ENCODE measurements at regions of chr2 and their contacts with region 1.

Region 1: GRCh38 chr2:108575132-108575966 is 41.1 kb downstream of the LIMS1 start:
- DNase-seq: peak; percentile 70
- ATAC-seq: peak; percentile 92
- H3K4me3 ChIP-seq: peak overlapping the region; percentile 24; the same call in 1 of the 2 replicates
- H3K27ac ChIP-seq: no peak overlapping the region
- H3K4me1 ChIP-seq: peaks cover 13% of the 10 kb centered on the region
- H3K27me3 ChIP-seq: no peaks in the 10 kb centered on the region
- CTCF ChIP-seq: no peak
- EP300 ChIP-seq: peak; percentile 42 to 72; a peak in 1 of 4 replicates
- POLR2A ChIP-seq: no peak
- RAD21 ChIP-seq: no peak

Region 2: GRCh38 chr2:108448678-108449493 is 126.5 kb before region 1 on chr2 and contains the start of gene GCC2:
- CTCF ChIA-PET with region 1: interaction called, 4 read pairs
- POLR2A ChIA-PET with region 1: interaction called, 12 read pairs
- RAD21 ChIA-PET with region 1: interaction called, 5 read pairs
- SMC1A ChIA-PET with region 1: interaction called, 20 read pairs
- in situ Hi-C with region 1: no loop called
- intact Hi-C with region 1: loop called (anchors 5 kb)
- DNase-seq: peak; percentile 75
- ATAC-seq: peak; percentile 95
- H3K4me3 ChIP-seq: peak within 1 kb of the TSS; percentile 93
- H3K27ac ChIP-seq: peak within 1 kb of the TSS; percentile 86
- H3K4me1 ChIP-seq: peaks cover 7% of the 10 kb centered on the region
- H3K27me3 ChIP-seq: no peaks in the 10 kb centered on the region
- CTCF ChIP-seq: no peak
- EP300 ChIP-seq: peak in 1 of 2 experiments; percentile 38; a peak in 2 of 4 replicates
- POLR2A ChIP-seq: peak; percentile 95
- RAD21 ChIP-seq: no peak
- polyA plus RNA-seq, gene GCC2: 11.8 to 13.5 TPM

Region 3: GRCh38 chr2:108542071-108542470 is 33.3 kb before region 1 on chr2:
- CTCF ChIA-PET with region 1: interaction called, 9 read pairs
- POLR2A ChIA-PET with region 1: interaction called, 13 read pairs
- RAD21 ChIA-PET with region 1: interaction called, 129 read pairs
- SMC1A ChIA-PET with region 1: interaction called, 214 read pairs
- in situ Hi-C with region 1: no loop called
- intact Hi-C with region 1: loop called (anchors 5 kb)
- DNase-seq: no peak
- ATAC-seq: no peak
- H3K4me3 ChIP-seq: no peak overlapping the region
- H3K27ac ChIP-seq: no peak overlapping the region
- H3K4me1 ChIP-seq: no peaks in the 10 kb centered on the region; the same call in 1 of the 2 replicates
- H3K27me3 ChIP-seq: no peaks in the 10 kb centered on the region
- CTCF ChIP-seq: no peak
- EP300 ChIP-seq: no peak
- POLR2A ChIP-seq: no peak
- RAD21 ChIP-seq: no peak

Region 4: DNA sequence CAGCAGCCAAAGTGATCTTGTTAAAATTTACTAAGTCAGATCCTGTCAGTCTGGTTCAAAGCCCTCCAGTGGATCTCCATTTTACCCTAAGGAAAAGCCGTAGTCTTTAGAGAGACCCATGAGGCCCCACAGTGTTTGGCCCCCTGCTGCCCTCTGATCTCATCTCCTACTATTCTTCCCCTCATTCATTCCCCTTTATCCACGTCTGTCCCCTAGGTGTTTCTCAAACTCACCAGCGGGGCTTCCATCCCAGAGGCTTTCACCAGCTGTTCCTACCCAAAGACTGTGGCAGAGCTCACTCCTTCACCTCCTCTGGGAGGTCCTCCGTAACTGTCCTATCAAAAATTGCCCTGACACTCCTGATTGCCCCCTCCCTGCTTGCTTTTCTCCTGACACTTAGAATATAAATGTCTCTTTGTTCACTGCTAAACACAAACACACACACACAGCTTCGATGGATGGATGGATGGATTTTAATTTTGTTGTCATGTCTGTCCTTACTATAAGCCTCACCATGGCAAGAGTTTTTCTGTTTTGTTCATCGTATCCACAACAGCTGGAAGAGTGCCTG is 15.0 kb before region 1 on chr2:
- CTCF ChIA-PET with region 1: interaction called, 10 read pairs
- POLR2A ChIA-PET with region 1: interaction called, 16 read pairs
- RAD21 ChIA-PET with region 1: interaction called, 11 read pairs
- SMC1A ChIA-PET with region 1: interaction called, 66 read pairs
- in situ Hi-C with region 1: no loop called
- intact Hi-C with region 1: no loop called
- DNase-seq: no peak
- ATAC-seq: no peak
- H3K4me3 ChIP-seq: no peak overlapping the region
- H3K27ac ChIP-seq: no peak overlapping the region
- H3K4me1 ChIP-seq: peaks cover under 1% of the 10 kb centered on the region
- H3K27me3 ChIP-seq: no peaks in the 10 kb centered on the region
- CTCF ChIP-seq: no peak
- EP300 ChIP-seq: no peak
- POLR2A ChIP-seq: no peak
- RAD21 ChIP-seq: no peak

Region 5: DNA sequence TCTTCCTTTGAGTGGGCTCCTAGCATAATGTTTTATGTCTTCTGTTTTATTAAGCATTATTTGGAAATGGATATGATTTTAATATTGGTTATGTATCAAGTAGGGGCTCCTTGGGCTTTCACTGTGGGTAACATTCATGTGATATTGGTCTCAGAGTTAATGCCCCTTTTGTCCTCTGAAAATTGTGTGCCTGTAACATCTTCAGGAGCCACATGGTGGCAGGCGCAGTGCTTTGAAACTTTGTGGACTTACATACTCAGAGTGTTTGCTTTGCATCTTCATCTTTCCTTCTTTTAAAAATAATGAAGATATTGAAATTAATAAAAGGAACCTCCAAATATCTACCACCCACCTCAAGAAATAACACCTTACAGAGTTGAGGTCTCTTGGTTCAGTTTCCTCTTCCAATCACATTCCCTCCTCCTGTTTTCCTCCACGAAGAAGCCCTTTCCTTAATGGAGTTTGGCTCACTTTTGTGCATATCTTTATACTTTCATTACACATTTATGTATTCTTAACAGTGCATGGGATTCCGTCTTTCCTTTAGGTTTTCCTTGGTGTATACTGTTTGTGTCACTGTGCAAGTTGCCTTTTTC is 32.5 kb after region 1 on chr2:
- CTCF ChIA-PET with region 1: interaction called, 13 read pairs
- POLR2A ChIA-PET with region 1: interaction called, 8 read pairs
- RAD21 ChIA-PET with region 1: interaction called, 18 read pairs
- SMC1A ChIA-PET with region 1: interaction called, 21 read pairs
- in situ Hi-C with region 1: no loop called
- intact Hi-C with region 1: no loop called
- DNase-seq: no peak
- ATAC-seq: peak; percentile 17; the same call in 1 of the 3 replicates
- H3K4me3 ChIP-seq: no peak overlapping the region
- H3K27ac ChIP-seq: no peak overlapping the region
- H3K4me1 ChIP-seq: peaks cover 47% of the 10 kb centered on the region
- H3K27me3 ChIP-seq: no peaks in the 10 kb centered on the region
- CTCF ChIP-seq: peak; percentile 67 to 80 (median 74)
- EP300 ChIP-seq: no peak
- POLR2A ChIP-seq: no peak
- RAD21 ChIP-seq: peak; percentile 93

Region 6: GRCh38 chr2:109062859-109063700 is 487.7 kb after region 1 on chr2:
- CTCF ChIA-PET with region 1: no interaction called
- POLR2A ChIA-PET with region 1: no interaction called
- RAD21 ChIA-PET with region 1: no interaction called
- SMC1A ChIA-PET with region 1: no interaction called
- in situ Hi-C with region 1: no loop called
- intact Hi-C with region 1: no loop called
- DNase-seq: no peak
- ATAC-seq: no peak
- H3K4me3 ChIP-seq: no peak overlapping the region
- H3K27ac ChIP-seq: no peak overlapping the region
- H3K4me1 ChIP-seq: no peaks in the 10 kb centered on the region
- H3K27me3 ChIP-seq: no peaks in the 10 kb centered on the region; a peak in 3 of 4 replicates
- CTCF ChIP-seq: no peak
- EP300 ChIP-seq: no peak
- POLR2A ChIP-seq: no peak
- RAD21 ChIP-seq: no peak